ENCODE measurements at regions of chr6 and their contacts with region 1.

Region 1: DNA sequence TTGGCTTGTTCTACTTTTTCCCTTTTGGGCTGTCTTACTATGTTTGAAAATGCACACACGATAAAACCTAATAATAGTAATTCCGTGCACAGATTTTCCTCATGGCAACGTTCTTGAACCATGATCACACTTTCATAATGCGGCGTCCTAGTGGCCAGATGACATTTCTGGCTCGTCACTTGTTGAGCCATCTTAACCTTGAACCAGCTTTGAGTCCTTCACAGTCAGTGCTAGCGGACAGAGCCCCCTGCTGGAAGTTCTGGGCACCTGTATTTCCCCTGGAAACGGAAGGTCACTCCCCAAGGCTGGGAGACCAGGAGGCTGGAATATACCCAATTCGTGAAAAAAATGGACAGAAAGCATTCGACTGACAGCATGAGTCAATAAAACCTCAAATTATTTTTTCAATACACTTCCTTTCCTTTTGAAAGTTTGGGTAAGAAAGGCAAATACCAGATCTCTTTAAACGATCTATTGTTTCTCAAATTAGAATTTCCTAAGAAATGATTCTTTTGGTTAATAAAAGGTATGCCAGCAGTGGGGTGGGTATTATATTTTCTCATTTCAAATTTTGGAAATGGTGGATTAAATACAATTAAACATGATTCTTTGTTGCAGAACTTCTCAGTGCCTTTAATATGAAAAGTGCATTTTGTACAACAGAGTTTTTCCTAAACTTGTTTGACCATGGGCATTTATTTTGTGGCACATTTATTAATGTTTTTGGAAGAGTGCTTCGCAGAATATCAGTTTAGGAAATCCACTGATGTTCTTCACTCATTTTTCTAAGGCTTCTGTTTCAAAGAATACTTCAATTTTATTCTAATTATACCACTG is 542.3 kb downstream of the QKI start:
- DNase-seq: peak; percentile 89

Region 2: DNA sequence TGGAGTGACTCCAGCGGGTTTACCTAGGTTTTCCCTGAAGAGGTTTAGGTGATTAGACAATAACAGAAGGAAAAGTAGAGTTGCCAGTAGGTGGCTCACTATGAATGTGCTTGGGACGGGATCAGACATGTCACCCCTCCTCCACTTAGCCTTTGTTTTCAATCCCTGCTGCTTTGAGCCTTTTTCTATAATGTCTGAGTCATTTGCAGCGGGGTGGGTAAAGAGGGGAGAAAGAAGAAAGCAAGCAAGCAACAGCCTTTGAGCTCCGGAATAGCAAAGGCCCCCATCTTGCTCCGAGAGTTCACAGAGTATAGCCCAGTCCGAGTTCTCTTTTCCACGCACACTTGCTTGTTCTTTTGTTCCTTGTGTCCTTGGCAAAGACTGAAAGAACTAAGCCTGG is 1099.9 kb before region 1 on chr6:
- intact Hi-C with region 1: loop called (anchors 10 kb)
- DNase-seq: no peak

Region 3: DNA sequence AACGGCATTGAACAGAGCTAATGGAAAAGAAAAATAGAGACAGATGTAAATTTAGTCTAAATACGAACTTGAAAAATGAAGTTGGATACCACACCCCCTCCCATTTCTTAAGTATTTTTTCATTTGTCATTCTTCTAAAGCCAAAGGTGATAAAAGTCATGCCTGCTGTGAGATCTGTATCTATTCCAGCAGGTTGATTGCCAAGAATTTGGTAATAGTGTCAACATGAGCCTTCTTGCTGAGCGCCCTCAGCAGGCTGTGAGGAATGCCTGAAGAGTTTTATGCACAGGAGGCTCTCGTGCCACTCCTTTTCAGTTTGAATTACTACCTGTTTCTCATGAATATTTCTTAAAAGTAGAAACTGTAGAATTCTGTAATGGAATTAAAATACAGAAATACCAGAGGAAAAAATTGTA is 376.9 kb before region 1 on chr6:
- intact Hi-C with region 1: loop called (anchors 5 kb)
- DNase-seq: no peak

Measured in cardiac septum (tissue), 1 donor.